ENCODE measurements at regions of chrX and their contacts with region 1.

Region 1: DNA sequence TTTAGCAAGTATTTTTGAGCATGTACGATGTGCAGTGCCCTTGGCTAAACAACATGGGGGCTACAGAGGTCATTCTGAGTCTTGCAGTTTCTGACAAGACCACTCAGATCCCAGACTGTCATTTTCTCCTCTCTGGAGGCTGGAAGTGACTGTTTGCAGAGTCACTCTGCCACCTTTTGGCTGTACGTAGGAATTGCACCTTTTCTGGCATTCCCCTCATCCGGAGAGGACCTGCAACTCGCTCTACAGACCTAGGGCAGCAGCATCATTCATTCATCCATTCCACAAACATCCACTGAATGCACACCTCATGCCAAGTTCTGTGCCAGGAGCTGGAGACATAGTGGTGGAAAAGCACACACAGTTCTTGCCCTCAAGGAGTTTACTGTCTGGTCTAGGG is 160.4 kb upstream of the GPR101 start:
- H3K4me3 ChIP-seq: no peak overlapping the region
- H3K27ac ChIP-seq: no peak overlapping the region
- H3K4me1 ChIP-seq: no peaks in the 10 kb centered on the region
- CTCF ChIP-seq: no peak

Region 2: GRCh38 chrX:136953867-136954787 is 240.0 kb before region 1 on chrX:
- CTCF ChIA-PET with region 1: interaction called, 15 read pairs
- POLR2A ChIA-PET with region 1: no interaction called
- H3K4me3 ChIP-seq: no peak overlapping the region
- H3K27ac ChIP-seq: no peak overlapping the region
- H3K4me1 ChIP-seq: no peaks in the 10 kb centered on the region
- CTCF ChIP-seq: no peak; the same call in 1 of the 2 replicates

Region 3: DNA sequence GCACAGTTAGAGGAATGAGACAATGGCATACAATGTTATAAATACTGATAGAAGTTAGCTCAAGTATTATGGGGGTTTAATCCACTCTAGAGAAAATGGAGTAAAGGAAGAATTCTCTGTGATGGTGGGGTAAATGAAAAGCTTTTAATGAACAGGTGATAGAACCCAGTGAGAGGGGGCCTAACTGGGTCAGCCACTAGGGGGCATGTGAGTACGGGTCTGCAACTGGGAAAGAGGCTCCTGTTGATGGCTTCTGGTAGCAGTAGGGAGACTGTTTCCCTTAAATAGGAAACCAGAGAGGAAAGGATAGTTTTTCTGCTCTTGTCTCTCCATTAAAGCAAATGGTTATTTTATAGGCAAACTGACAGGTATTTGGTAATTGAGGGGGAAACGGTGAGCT is 27.6 kb before region 1 on chrX:
- CTCF ChIA-PET with region 1: interaction called, 18 read pairs
- POLR2A ChIA-PET with region 1: no interaction called
- H3K4me3 ChIP-seq: no peak overlapping the region
- H3K27ac ChIP-seq: no peak overlapping the region
- H3K4me1 ChIP-seq: no peaks in the 10 kb centered on the region
- CTCF ChIP-seq: no peak